ENCODE measurements at regions of chr10 and their contacts with region 1.

Region 1: GRCh38 chr10:93482145-93482834 is at the start of gene MYOF:
- DNase-seq: peak; percentile 58 to 72 (median 67)
- H3K4me3 ChIP-seq: peak within 1 kb of the TSS; percentile 10 to 80
- H3K4me3 Mint-ChIP-seq: peak within 1 kb of the TSS; percentile 80 to 94 (median 90)
- H3K27ac ChIP-seq: no peak within 1 kb of the TSS
- H3K27ac Mint-ChIP-seq: peak within 1 kb of the TSS in 3 of 7 donors; percentile 23 to 72 (median 36)
- H3K4me1 ChIP-seq: peaks cover 8% of the 10 kb centered on the region
- H3K4me1 Mint-ChIP-seq: peaks cover 7 to 10% (median 8%) of the 10 kb centered on the region in 4 donors
- H3K27me3 ChIP-seq: peaks cover 8% of the 10 kb centered on the region
- H3K27me3 Mint-ChIP-seq: peaks cover 16 to 25% of the 10 kb centered on the region in 2 donors
- total RNA-seq, gene MYOF: 1.2 to 2.2 TPM

Region 2: GRCh38 chr10:93352638-93353383 is 129.5 kb before region 1 on chr10:
- CTCF ChIA-PET with region 1: interaction called, 13 read pairs
- POLR2A ChIA-PET with region 1: interaction called, 3 read pairs
- intact Hi-C with region 1: no loop called
- DNase-seq: peak in 4 of 5 donors; percentile 43 to 46 (median 45)
- H3K4me3 ChIP-seq: no peak overlapping the region
- H3K4me3 Mint-ChIP-seq: no peak overlapping the region
- H3K27ac ChIP-seq: no peak overlapping the region
- H3K27ac Mint-ChIP-seq: no peak overlapping the region
- H3K4me1 ChIP-seq: no peaks in the 10 kb centered on the region
- H3K4me1 Mint-ChIP-seq: peaks cover 0 to 3% (median 0%) of the 10 kb centered on the region in 4 donors
- H3K27me3 ChIP-seq: no peaks in the 10 kb centered on the region
- H3K27me3 Mint-ChIP-seq: peaks cover 7 to 10% of the 10 kb centered on the region in 2 donors

Region 3: GRCh38 chr10:93376372-93377293 is 105.7 kb before region 1 on chr10:
- CTCF ChIA-PET with region 1: interaction called, 726 read pairs
- POLR2A ChIA-PET with region 1: interaction called, 31 read pairs
- intact Hi-C with region 1: loop called (anchors 1 kb)
- DNase-seq: peak; percentile 62 to 75 (median 69)
- H3K4me3 ChIP-seq: no peak overlapping the region
- H3K4me3 Mint-ChIP-seq: no peak overlapping the region
- H3K27ac ChIP-seq: no peak overlapping the region
- H3K27ac Mint-ChIP-seq: peak overlapping the region in 1 of 7 donors; percentile 38
- H3K4me1 ChIP-seq: peaks cover 11% of the 10 kb centered on the region
- H3K4me1 Mint-ChIP-seq: peaks cover 9 to 18% (median 9%) of the 10 kb centered on the region in 4 donors
- H3K27me3 ChIP-seq: no peaks in the 10 kb centered on the region
- H3K27me3 Mint-ChIP-seq: peaks cover 0 to 1% of the 10 kb centered on the region in 2 donors

Region 4: DNA sequence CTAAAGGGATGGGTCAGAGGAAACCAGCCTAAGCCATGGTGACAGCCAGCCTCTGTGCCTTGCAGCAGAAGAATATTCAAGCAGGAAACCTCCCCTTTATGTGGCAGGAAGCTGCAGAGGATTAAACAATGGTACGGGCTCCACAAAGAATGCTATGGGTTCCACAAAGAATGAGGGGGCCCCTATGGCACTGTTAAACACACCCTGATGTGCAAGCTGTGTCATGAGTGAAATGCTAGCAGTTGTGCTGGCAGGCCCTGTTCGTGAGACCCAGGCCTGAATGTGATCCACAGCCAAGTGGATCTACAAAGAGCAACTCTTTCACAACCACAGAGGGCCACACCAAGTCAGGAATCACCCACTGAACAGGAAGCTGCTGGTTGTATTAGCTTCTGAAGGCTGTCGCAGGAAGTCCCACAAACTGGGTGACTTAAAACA is 69.0 kb before region 1 on chr10:
- CTCF ChIA-PET with region 1: interaction called, 11 read pairs
- POLR2A ChIA-PET with region 1: interaction called, 7 read pairs
- intact Hi-C with region 1: loop called (anchors 1 kb)
- DNase-seq: peak; percentile 53 to 66 (median 64)
- H3K4me3 ChIP-seq: peak overlapping the region in 1 of 2 donors; percentile 33
- H3K4me3 Mint-ChIP-seq: peak overlapping the region; percentile 5 to 88 (median 67)
- H3K27ac ChIP-seq: peak overlapping the region; percentile 48
- H3K27ac Mint-ChIP-seq: peak overlapping the region; percentile 79 to 98 (median 94)
- H3K4me1 ChIP-seq: peaks cover 60% of the 10 kb centered on the region
- H3K4me1 Mint-ChIP-seq: peaks cover 47 to 83% (median 70%) of the 10 kb centered on the region in 4 donors
- H3K27me3 ChIP-seq: no peaks in the 10 kb centered on the region
- H3K27me3 Mint-ChIP-seq: no peaks in the 10 kb centered on the region

Region 5: GRCh38 chr10:93471110-93471651 is 11.1 kb before region 1 on chr10:
- CTCF ChIA-PET with region 1: interaction called, 16 read pairs
- POLR2A ChIA-PET with region 1: no interaction called
- intact Hi-C with region 1: no loop called
- DNase-seq: no peak
- H3K4me3 ChIP-seq: no peak overlapping the region
- H3K4me3 Mint-ChIP-seq: no peak overlapping the region
- H3K27ac ChIP-seq: no peak overlapping the region
- H3K27ac Mint-ChIP-seq: no peak overlapping the region
- H3K4me1 ChIP-seq: no peaks in the 10 kb centered on the region
- H3K4me1 Mint-ChIP-seq: no peaks in the 10 kb centered on the region
- H3K27me3 ChIP-seq: no peaks in the 10 kb centered on the region
- H3K27me3 Mint-ChIP-seq: no peaks in the 10 kb centered on the region

Region 6: GRCh38 chr10:93503075-93503474 is 20.8 kb after region 1 on chr10:
- CTCF ChIA-PET with region 1: interaction called, 126 read pairs
- POLR2A ChIA-PET with region 1: no interaction called
- intact Hi-C with region 1: no loop called
- DNase-seq: peak in 1 of 5 donors; percentile 7
- H3K4me3 ChIP-seq: peak overlapping the region in 1 of 2 donors; percentile 43
- H3K4me3 Mint-ChIP-seq: peak overlapping the region; percentile 61 to 86 (median 73)
- H3K27ac ChIP-seq: peak overlapping the region; percentile 31
- H3K27ac Mint-ChIP-seq: peak overlapping the region; percentile 23 to 93 (median 72)
- H3K4me1 ChIP-seq: peaks cover 28% of the 10 kb centered on the region
- H3K4me1 Mint-ChIP-seq: peaks cover 15 to 31% (median 23%) of the 10 kb centered on the region in 4 donors
- H3K27me3 ChIP-seq: no peaks in the 10 kb centered on the region
- H3K27me3 Mint-ChIP-seq: no peaks in the 10 kb centered on the region

Region 7: DNA sequence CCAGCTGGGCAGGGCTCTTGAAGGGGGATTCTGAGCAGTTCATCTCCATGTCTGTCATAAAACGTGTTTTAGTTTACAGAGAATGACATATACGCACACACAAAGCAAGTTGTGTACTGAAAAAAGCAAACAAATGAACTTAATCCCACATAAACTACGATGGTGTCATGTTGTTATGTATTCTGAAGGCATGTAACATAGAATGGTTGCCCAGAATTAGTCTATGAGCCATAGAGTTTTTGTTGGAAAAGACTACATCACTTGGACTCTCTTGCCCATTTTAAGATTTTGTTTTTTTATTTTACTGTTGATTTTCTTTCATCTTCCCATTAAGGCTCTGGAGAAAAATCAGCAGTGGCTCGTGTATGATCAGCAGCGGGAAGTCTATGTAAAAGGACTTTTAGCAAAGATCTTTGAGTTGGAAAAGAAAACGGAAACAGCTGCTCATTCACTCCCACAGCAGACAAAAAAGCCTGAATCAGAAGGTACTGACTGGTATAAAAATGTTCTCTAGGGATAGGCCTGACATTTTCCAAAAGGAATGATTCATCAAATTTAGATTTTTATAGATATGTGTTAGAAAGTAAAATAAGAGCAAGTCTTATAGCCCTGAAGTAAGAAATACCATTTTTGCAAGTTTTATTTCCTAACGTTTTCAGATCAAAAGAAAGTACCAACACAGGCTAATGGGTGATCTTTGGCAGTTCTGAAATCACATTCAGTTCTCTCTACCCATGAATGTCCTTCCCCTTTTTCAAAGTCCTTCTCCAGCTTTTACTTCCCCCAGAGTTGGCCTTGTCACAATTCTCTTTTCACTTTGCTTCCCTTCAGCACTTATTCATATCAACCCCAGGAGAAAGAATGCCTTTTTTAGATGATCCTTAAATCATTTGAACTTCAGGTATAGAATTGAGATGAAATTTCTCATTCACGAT is 33.0 kb after region 1 on chr10:
- CTCF ChIA-PET with region 1: interaction called, 126 read pairs
- POLR2A ChIA-PET with region 1: no interaction called
- intact Hi-C with region 1: loop called (anchors 2 kb)
- DNase-seq: no peak
- H3K4me3 ChIP-seq: no peak overlapping the region
- H3K4me3 Mint-ChIP-seq: no peak overlapping the region
- H3K27ac ChIP-seq: no peak overlapping the region
- H3K27ac Mint-ChIP-seq: no peak overlapping the region
- H3K4me1 ChIP-seq: no peaks in the 10 kb centered on the region
- H3K4me1 Mint-ChIP-seq: peaks cover 0 to 4% (median 3%) of the 10 kb centered on the region in 4 donors
- H3K27me3 ChIP-seq: no peaks in the 10 kb centered on the region
- H3K27me3 Mint-ChIP-seq: no peaks in the 10 kb centered on the region